Activated CD4-positive, alpha-beta T cell treated with anti-CD3 and anti-CD28 coated beads for 36 hours (primary cell): ENCODE measurements at regions of chr3 and their contacts with region 1.

Region 1: GRCh38 chr3:15377961-15378791 is 45.8 kb upstream of the SH3BP5 start:
- DNase-seq: peak; percentile 96
- ATAC-seq: peak; percentile 96
- H3K4me3 Mint-ChIP-seq: no peak overlapping the region
- H3K27ac Mint-ChIP-seq: peak overlapping the region; percentile 73
- H3K4me1 Mint-ChIP-seq: peaks cover 6% of the 10 kb centered on the region
- H3K27me3 Mint-ChIP-seq: no peaks in the 10 kb centered on the region

Region 2: GRCh38 chr3:15299036-15299435 is 79.1 kb before region 1 on chr3:
- CTCF ChIA-PET with region 1: no interaction called
- POLR2A ChIA-PET with region 1: no interaction called
- intact Hi-C with region 1: no loop called
- DNase-seq: peak; percentile 28
- ATAC-seq: peak; percentile 20
- H3K4me3 Mint-ChIP-seq: no peak overlapping the region
- H3K27ac Mint-ChIP-seq: peak overlapping the region; percentile 45
- H3K4me1 Mint-ChIP-seq: peaks cover 65% of the 10 kb centered on the region
- H3K27me3 Mint-ChIP-seq: no peaks in the 10 kb centered on the region

Region 3: GRCh38 chr3:15361494-15362212 is 16.5 kb before region 1 on chr3:
- CTCF ChIA-PET with region 1: interaction called, 6 read pairs
- POLR2A ChIA-PET with region 1: no interaction called
- intact Hi-C with region 1: loop called (anchors 1 kb)
- DNase-seq: peak; percentile 83
- ATAC-seq: peak; percentile 76
- H3K4me3 Mint-ChIP-seq: peak overlapping the region; percentile 53
- H3K27ac Mint-ChIP-seq: peak overlapping the region; percentile 87
- H3K4me1 Mint-ChIP-seq: peaks cover 38% of the 10 kb centered on the region
- H3K27me3 Mint-ChIP-seq: peaks cover 2% of the 10 kb centered on the region

Region 4: GRCh38 chr3:16190704-16191103 is 812.5 kb after region 1 on chr3:
- CTCF ChIA-PET with region 1: no interaction called
- POLR2A ChIA-PET with region 1: no interaction called
- intact Hi-C with region 1: no loop called
- DNase-seq: no peak
- ATAC-seq: no peak
- H3K4me3 Mint-ChIP-seq: no peak overlapping the region
- H3K27ac Mint-ChIP-seq: no peak overlapping the region
- H3K4me1 Mint-ChIP-seq: no peaks in the 10 kb centered on the region
- H3K27me3 Mint-ChIP-seq: no peaks in the 10 kb centered on the region